SK-N-SH (cell line): ENCODE measurements at regions of chr7 and their contacts with region 1.

Region 1: DNA sequence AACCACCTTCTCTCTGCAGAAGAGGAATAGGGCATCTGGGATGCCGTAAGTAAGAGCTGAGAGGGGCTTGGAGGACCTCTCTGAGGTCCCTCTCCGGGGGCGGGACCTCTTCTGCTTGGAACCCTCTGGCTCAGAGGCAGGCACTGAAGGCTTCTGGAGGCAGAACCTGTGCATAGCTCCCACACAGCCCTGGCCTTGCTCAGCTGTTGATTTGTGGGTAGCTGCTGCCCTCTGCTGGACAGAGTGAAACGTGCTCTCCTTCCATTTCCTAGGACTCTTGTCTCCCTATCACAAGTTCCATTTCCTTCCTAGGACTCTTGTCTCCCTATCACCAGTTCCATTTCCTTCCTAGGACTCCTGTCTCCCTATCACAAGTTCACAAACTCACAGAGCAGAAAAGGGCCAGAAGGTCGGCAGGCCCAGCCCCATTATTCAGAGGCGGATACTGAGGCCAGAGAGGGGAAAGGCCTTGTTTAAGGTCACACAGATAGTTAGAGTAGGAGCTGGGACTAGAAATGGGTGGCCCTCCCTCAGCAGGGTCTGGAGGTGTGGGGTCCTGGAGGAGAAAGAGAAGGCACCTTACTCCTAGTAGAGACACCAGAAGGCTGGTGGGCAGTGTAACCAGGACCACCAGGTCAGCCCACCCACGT is 30.3 kb upstream of the GARS1 start:
- DNase-seq: peak; percentile 85
- H3K4me3 ChIP-seq: no peak overlapping the region
- H3K27ac ChIP-seq: no peak overlapping the region; a peak in 1 of 4 replicates
- H3K4me1 ChIP-seq: peaks cover 0 to 9% of the 10 kb centered on the region in 2 experiments; a peak in 1 of 4 replicates
- H3K27me3 ChIP-seq: no peaks in the 10 kb centered on the region
- CTCF ChIP-seq: peak; percentile 96
- EP300 ChIP-seq: no peak
- RAD21 ChIP-seq: peak; percentile 99

Region 2: GRCh38 chr7:30164567-30164966 is 399.8 kb before region 1 on chr7:
- CTCF ChIA-PET with region 1: interaction called, 31 read pairs
- POLR2A ChIA-PET with region 1: no interaction called
- DNase-seq: peak; percentile 65
- H3K4me3 ChIP-seq: no peak overlapping the region
- H3K27ac ChIP-seq: peak overlapping the region in 1 of 2 experiments; percentile 77; a peak in 1 of 4 replicates
- H3K4me1 ChIP-seq: peaks cover 13 to 19% of the 10 kb centered on the region in 2 experiments
- H3K27me3 ChIP-seq: no peaks in the 10 kb centered on the region
- CTCF ChIP-seq: peak; percentile 85
- EP300 ChIP-seq: no peak
- RAD21 ChIP-seq: peak; percentile 95

Region 3: DNA sequence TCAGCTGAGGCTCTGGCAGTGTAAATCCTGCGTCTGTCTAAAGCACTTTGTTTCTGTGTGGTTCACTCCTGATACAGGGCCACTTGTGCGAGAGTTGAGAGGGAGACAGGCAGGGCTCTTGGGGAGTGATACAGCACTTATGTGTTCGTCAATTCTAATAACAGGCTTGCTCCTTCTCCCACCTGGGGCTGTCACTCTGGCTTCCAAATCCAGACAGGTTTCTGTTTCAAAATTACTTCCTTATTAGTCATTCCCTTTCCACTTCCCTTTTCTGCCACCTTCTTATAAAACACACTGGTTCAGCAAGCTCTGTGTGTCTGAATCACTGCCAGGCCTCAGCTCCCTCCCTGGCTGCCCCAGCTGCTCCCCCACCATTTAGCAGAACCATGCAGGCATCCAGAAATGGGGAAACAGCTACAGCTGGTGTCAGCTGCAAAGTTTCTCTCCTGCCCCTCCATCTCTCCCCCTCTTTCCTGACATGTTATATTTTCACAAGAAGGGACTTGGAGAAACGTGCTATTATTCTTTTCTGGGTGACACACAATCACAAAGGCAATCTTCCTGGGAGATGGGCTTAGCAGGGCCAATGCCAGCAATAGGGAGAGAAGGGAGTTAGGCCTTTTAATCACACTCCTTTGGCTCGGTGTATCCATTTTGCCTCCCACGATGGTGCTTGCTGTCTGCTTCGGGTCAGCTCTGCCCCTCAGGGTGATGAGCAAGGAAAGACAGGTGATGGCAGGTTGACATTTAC is 338.3 kb before region 1 on chr7:
- CTCF ChIA-PET with region 1: interaction called, 12 read pairs
- POLR2A ChIA-PET with region 1: no interaction called
- DNase-seq: peak; percentile 32
- H3K4me3 ChIP-seq: no peak overlapping the region
- H3K27ac ChIP-seq: peak overlapping the region in 1 of 2 experiments; percentile 79; a peak in 2 of 4 replicates
- H3K4me1 ChIP-seq: peaks cover 9 to 24% of the 10 kb centered on the region in 2 experiments; a peak in 2 of 4 replicates
- H3K27me3 ChIP-seq: no peaks in the 10 kb centered on the region
- CTCF ChIP-seq: no peak
- EP300 ChIP-seq: no peak
- RAD21 ChIP-seq: no peak

Region 4: GRCh38 chr7:30396389-30396788 is 168.0 kb before region 1 on chr7:
- CTCF ChIA-PET with region 1: interaction called, 20 read pairs
- POLR2A ChIA-PET with region 1: no interaction called
- DNase-seq: peak; percentile 17
- H3K4me3 ChIP-seq: no peak overlapping the region
- H3K27ac ChIP-seq: no peak overlapping the region
- H3K4me1 ChIP-seq: no peaks in the 10 kb centered on the region
- H3K27me3 ChIP-seq: no peaks in the 10 kb centered on the region
- CTCF ChIP-seq: no peak
- EP300 ChIP-seq: no peak
- RAD21 ChIP-seq: peak; percentile 67

Region 5: DNA sequence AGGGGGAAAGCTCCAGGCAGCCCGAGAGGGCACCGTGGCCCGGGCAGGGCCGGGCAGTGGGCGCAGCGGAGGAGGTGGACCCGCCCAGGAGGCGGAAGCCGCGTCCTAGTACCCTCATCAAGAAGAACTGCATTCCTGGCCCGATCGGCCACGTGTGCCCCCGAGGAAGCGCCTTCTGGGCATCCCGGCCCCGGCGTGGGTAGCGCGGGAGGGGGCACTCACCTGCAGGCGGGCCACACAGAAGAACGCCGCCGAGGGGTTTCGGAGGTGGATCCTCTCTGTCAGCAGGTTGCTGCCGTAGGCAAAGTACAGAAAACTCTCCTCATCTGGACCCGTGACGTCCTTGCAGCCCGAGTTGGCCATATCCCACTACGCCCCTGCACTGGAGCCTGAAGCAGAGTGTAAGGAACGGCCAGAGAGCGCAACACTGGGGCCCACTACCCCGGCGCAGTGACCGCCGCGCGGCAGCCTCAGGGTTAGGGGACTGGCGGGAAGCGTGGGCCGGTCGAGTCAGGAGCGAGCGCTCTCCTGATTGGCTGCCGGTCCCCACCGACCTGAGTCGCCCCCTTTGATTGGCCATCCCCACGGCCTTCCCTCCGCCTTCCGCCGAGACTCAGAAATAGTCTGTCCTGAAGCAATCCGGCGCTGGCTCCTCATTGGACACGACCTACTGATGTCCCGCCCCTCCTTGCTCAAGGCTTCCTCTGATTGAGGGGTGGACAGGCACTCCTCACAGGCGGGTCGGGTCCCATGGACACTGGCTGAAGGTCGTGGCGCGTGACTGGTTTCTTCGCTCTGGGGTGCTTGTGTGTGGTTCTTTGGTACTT is 59.8 kb before region 1 on chr7 and contains the start of gene GGCT:
- CTCF ChIA-PET with region 1: interaction called, 55 read pairs
- POLR2A ChIA-PET with region 1: no interaction called
- DNase-seq: peak; percentile 100
- H3K4me3 ChIP-seq: peak within 1 kb of the TSS; percentile 94 to 98
- H3K27ac ChIP-seq: peak within 1 kb of the TSS; percentile 51 to 93
- H3K4me1 ChIP-seq: peaks cover 0 to 20% of the 10 kb centered on the region in 2 experiments; a peak in 2 of 4 replicates
- H3K27me3 ChIP-seq: no peaks in the 10 kb centered on the region
- CTCF ChIP-seq: no peak
- EP300 ChIP-seq: no peak
- RAD21 ChIP-seq: peak; percentile 5; the same call in 1 of the 2 replicates
- polyA plus RNA-seq, gene GGCT: 20.8 and 21.8 TPM in 2 replicates

Region 6: DNA sequence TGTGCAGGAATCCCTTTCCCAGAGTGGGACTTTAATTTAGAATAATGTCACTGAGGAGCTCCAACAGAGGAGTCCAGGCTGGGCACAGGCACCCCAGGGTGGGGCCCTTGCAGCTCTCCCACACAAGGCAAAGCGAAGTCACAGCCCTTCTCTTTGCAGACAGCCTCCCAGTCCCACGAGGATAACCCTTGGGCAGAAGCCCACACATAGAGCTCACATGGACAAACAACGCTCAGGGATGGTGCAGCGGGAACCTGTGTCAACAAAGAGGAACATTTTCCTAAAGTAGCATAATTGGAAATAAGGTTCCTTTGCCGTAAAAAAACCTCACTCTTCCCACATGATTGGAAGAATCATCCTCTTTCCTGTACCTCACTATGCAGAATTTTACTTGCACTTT is 30.5 kb before region 1 on chr7:
- CTCF ChIA-PET with region 1: interaction called, 15 read pairs
- POLR2A ChIA-PET with region 1: no interaction called
- DNase-seq: no peak
- H3K4me3 ChIP-seq: no peak overlapping the region
- H3K27ac ChIP-seq: no peak overlapping the region
- H3K4me1 ChIP-seq: no peaks in the 10 kb centered on the region
- H3K27me3 ChIP-seq: no peaks in the 10 kb centered on the region
- CTCF ChIP-seq: no peak
- EP300 ChIP-seq: no peak
- RAD21 ChIP-seq: no peak